ENCODE measurements at regions of chr17 and their contacts with region 1.

Region 1: GRCh38 chr17:15502369-15503112 is 35.1 kb upstream of the CDRT4 start:
- DNase-seq: peak; percentile 77 to 92 (median 84)
- H3K4me3 ChIP-seq: peak overlapping the region in 1 of 4 donors; percentile 1
- H3K27ac ChIP-seq: peak overlapping the region in 2 of 5 donors; percentile 62 to 76
- H3K4me1 ChIP-seq: peaks cover 0 to 11% of the 10 kb centered on the region in 2 donors
- H3K27me3 ChIP-seq: no peaks in the 10 kb centered on the region
- CTCF ChIP-seq: peak; percentile 60 to 90 (median 83)
- POLR2A ChIP-seq: no peak

Region 2: DNA sequence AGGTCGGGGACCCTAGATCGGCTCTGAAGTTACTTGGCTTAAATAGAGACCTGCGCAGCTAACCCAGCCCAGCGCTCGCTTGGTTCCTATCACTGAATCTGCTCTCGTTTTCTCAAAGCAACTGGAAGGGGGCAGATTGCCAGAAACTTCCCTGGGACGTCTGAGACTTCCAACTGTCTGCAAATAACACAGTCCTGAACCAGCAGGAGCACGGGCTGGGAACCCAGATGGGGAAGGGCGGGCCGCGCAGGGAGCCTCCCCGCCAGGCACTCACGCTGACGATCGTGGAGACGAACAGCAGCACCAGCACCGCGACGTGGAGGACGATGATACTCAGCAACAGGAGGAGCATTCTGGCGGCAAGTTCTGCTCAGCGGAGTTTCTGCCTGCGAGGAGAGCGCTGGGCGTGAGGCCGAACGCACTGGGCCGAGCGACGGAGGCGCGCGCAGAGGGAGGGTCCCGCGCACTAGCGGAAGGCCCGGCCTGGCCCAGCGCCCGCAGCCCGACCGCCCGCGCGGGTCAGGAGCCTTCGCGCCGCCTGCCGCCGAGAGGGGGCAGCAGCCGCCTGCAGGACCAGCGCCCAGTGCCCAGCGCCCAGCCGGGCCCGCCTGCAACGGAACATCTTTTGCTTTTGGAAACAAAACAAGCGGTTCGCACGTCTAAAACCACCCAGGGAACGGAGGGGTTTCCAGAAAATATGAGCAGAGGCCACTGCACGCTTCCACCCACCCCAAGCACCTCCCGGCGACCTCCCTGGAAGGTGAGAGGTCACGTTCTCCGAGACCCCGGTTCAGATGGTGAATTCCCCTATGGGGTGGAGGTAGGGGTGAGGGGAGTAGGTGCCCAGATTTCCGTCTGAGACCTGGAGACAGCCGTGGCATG is 241.9 kb before region 1 on chr17:
- intact Hi-C with region 1: loop called (anchors 5 kb)
- DNase-seq: peak; percentile 82 to 93 (median 90)
- H3K4me3 ChIP-seq: peak overlapping the region in 3 of 4 donors; percentile 52 to 72 (median 54)
- H3K27ac ChIP-seq: peak overlapping the region; percentile 74 to 97 (median 94)
- H3K4me1 ChIP-seq: peaks cover 13 to 51% of the 10 kb centered on the region in 2 donors
- H3K27me3 ChIP-seq: no peaks in the 10 kb centered on the region
- CTCF ChIP-seq: peak in 5 of 6 experiments; percentile 12 to 97 (median 90)
- POLR2A ChIP-seq: peak; percentile 56 to 75

Region 3: DNA sequence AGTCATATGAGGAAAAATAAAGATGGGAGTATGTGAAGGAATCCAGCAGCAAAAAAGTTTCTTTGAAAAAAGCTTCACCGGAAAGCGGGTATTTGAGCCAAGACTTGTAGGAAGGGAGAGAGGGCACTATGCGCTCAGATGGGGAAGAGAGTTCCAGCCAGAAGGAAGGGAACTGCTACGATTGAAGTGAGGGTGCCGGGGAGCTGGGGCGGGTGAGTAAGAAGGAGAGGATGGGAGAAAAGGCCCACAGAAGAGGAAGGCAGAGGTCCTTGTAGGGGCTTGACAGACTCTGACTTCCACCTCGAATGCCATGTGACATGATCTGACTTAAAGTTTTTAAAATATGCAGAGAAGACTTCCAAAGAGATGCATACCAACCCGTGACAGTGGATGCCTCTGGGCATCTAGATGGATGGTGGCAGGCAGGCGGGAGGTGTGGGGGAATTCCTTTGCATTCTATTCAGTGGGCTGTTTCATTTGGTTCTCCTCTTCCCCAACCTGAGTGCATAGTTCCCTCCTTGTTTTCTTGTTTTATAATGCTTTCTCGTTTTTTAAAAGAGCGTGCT is 80.1 kb before region 1 on chr17:
- intact Hi-C with region 1: no loop called
- DNase-seq: no peak
- H3K4me3 ChIP-seq: no peak overlapping the region
- H3K27ac ChIP-seq: no peak overlapping the region
- H3K4me1 ChIP-seq: no peaks in the 10 kb centered on the region
- H3K27me3 ChIP-seq: no peaks in the 10 kb centered on the region
- CTCF ChIP-seq: no peak
- POLR2A ChIP-seq: no peak

Region 4: DNA sequence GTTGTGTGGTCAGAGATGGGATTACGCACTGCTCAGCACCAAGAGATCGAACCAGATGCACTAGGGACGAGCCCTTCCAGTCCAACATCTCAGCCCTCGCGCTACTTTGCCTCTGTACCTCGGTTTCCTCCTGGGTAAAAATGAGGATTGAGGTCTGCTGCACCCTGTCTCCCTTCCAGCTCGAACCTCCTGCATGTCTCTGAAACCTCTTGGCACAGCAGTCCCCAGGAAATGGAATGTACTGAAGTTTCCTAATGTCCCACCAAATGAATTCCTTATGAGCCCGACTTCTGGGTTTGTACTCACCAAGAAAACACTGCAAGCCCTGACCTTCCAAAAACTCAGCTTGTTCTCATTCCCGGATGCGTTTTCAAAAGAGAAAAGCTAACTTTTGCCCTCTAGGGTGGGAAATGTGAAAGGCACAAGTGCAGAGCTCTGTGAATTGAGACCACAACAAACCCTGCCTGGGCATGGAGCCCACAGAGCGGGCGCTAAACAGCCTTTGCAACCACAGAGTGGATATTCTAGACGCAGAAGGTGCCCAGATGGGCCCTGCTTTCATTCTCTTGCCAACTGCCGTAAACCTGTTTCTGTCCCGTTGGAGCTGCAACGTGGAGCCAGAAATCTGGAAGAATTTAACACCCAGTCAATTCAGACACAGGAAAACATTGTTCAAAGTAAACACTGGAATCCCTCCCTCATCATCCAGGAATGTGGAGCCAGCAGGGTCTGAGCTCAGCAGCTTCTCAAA is 45.4 kb before region 1 on chr17:
- intact Hi-C with region 1: no loop called
- DNase-seq: no peak
- H3K4me3 ChIP-seq: no peak overlapping the region
- H3K27ac ChIP-seq: peak overlapping the region in 1 of 5 donors; percentile 68
- H3K4me1 ChIP-seq: peaks cover 8 to 16% of the 10 kb centered on the region in 2 donors
- H3K27me3 ChIP-seq: no peaks in the 10 kb centered on the region
- CTCF ChIP-seq: peak in 2 of 6 experiments; percentile 9 to 39
- POLR2A ChIP-seq: no peak